Esophagus squamous epithelium (tissue), 5 donors: ENCODE measurements at regions of chr7 and their contacts with region 1.

Region 1: GRCh38 chr7:134690016-134690415 is 43.4 kb downstream of the BPGM start:
- DNase-seq: no peak
- H3K4me3 ChIP-seq: peak overlapping the region in 3 of 4 donors; percentile 13 to 24 (median 19)
- H3K27ac ChIP-seq: peak overlapping the region; percentile 32 to 78 (median 74)
- H3K4me1 ChIP-seq: peaks cover 0 to 24% (median 19%) of the 10 kb centered on the region in 3 donors
- H3K27me3 ChIP-seq: no peaks in the 10 kb centered on the region
- CTCF ChIP-seq: peak in 4 of 6 experiments; percentile 29 to 48 (median 45)
- POLR2A ChIP-seq: no peak

Region 2: DNA sequence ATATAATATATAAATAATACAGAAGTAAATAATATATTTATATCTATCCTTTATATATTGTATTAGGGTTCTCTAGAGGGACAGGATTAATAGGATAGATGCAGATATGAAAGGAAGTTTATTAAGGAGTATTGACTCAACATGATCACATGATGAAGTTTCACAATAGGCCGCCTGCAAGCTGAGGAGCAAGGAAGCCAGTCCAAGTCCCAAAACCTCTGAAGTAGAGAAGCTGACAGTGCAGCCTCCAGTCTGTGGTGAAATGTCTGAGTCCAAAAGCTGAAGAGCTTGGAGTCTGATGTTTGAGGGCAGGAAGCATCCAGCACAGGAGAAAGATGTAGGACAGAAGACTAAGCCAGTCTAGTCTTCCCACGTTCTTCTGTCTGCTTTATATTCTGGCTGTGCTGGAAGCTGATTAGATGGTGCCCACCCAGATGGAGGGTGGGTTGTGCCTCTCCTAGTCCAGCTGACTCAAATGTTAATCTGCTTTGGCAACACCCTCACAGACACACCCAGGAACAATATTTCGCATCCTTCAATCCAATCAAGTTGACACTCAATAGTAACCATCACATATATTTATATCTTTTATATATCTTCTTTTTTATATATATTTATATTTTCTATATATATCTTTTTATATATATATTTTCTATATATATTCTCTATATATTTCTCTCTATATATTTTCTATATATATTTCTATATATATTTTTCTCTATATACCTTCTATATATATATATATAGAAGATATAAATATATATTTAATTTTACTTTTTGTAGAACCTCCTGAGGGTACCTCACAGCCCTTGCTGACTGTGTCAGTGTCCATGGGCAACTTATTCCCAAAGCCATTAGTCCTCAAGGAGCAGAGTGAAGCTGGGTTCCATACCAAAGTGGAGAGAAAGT is 187.3 kb before region 1 on chr7:
- intact Hi-C with region 1: no loop called
- DNase-seq: no peak
- H3K4me3 ChIP-seq: no peak overlapping the region
- H3K27ac ChIP-seq: peak overlapping the region in 2 of 4 donors; percentile 18 to 59
- H3K4me1 ChIP-seq: peaks cover 0 to 6% (median 0%) of the 10 kb centered on the region in 3 donors
- H3K27me3 ChIP-seq: no peaks in the 10 kb centered on the region
- CTCF ChIP-seq: no peak
- POLR2A ChIP-seq: no peak

Region 3: DNA sequence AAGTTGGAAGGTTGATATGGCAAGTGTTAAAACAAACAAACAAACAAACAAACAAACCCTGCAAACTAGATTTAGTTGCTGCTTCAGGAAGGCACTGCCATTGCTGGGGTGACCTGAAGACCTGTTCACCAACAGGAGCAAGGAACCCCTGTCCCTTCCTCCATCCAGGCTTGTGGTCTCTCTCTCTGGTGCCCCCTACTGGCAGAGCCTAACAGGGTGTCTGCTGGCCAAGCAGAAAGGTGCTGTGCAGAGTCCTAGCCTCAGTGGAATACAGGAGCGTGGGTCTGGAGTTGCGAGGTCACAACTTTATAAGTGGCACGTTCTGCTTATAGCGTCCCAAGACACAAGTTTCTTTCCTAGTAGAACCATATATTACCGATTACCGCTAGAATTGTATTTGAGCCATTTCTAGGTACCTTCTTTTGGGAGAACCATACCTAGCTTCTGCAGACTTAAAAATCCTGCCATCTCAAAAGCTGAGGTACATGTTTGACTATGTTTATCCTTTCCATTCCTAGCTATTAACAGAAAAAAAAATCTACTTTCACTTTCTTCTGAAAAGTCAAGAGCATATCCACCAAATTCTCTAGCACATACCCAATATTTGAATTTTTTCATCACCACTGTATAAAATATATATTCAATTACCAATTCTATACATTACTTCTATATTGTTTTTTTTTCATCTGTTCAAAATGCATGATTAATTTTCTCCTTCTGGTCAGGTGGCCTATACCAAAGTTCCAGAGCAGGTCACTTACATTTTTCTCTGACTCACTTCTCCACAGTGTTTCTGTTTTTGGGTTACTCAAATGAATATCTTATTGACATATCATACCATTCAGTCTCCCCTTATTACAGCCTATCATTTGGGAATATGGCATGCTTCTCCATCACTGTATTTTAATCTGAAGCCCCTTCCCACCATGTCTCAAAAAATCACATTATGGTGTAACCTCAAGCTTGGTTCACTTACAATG is 60.4 kb after region 1 on chr7:
- intact Hi-C with region 1: no loop called
- DNase-seq: no peak
- H3K4me3 ChIP-seq: no peak overlapping the region
- H3K27ac ChIP-seq: no peak overlapping the region
- H3K4me1 ChIP-seq: peaks cover 0 to 19% (median 6%) of the 10 kb centered on the region in 3 donors
- H3K27me3 ChIP-seq: no peaks in the 10 kb centered on the region
- CTCF ChIP-seq: peak; percentile 28 to 62 (median 44)
- POLR2A ChIP-seq: no peak

Region 4: GRCh38 chr7:134954197-134955082 is 264.4 kb after region 1 on chr7:
- intact Hi-C with region 1: loop called (anchors 10 kb)
- DNase-seq: no peak
- H3K4me3 ChIP-seq: no peak overlapping the region
- H3K27ac ChIP-seq: peak overlapping the region in 1 of 4 donors; percentile 17
- H3K4me1 ChIP-seq: no peaks in the 10 kb centered on the region
- H3K27me3 ChIP-seq: no peaks in the 10 kb centered on the region
- CTCF ChIP-seq: peak in 5 of 6 experiments; percentile 44 to 68 (median 60)
- POLR2A ChIP-seq: no peak